Activated CD4-positive, alpha-beta memory T cell treated with anti-CD3 and anti-CD28 coated beads for 36 hours (primary cell): ENCODE measurements at regions of chr1 and their contacts with region 1.

Region 1: GRCh38 chr1:212035123-212035834 is at the starts of genes DTL and INTS7:
- DNase-seq: peak; percentile 99
- H3K4me3 Mint-ChIP-seq: peak within 1 kb of the TSS; percentile 97
- H3K27ac Mint-ChIP-seq: peak within 1 kb of the TSS; percentile 99
- H3K4me1 Mint-ChIP-seq: peaks cover 61% of the 10 kb centered on the region
- H3K27me3 Mint-ChIP-seq: peaks cover 2% of the 10 kb centered on the region
- total RNA-seq, gene DTL: 82.2 to 88.2 TPM
- total RNA-seq, gene INTS7: 19.3 to 19.6 TPM

Region 2: DNA sequence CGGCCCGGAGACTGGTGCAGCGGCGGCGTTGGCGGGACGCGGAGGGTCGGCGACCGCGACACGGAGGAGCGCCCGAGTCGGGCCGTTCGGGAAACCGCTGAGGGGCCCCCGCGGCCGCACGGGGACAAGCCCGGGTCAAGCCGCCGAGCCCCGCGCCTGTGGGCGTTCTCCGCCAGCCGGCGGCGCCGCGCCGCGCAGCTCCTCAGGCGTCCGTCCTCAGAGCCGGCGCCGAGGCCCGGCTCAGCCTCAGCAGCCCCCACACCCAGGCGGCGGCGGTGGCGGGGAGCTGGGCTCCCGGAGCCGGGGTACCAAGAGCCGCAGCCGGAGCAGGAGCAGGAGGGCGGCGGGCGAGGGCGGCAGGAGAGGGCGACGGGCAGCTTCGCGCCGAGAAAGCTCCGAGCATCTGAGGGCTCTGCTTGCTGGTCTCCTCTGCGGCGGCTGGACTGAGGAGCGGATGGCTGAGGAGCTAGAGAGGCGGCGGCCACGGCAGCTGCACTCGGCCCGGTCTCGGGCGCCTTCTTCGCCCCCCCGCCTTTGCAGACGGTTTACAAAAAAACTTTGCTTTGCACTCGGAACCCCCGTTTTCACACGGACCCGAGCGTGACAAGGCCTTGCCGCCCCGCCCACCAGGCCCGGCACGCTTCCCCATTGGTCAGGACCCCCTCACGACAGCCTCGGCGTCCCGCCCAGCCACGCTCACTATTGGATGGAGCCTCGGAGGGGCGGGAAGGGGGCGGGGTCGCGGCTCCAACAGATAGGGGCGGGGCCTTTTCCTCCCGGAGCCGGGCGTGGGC is 456.4 kb before region 1 on chr1 and contains the start of gene SLC30A1:
- CTCF ChIA-PET with region 1: interaction called, 6 read pairs
- POLR2A ChIA-PET with region 1: no interaction called
- intact Hi-C with region 1: loop called (anchors 1 kb)
- DNase-seq: peak; percentile 99
- H3K4me3 Mint-ChIP-seq: peak within 1 kb of the TSS; percentile 91
- H3K27ac Mint-ChIP-seq: peak within 1 kb of the TSS; percentile 69
- H3K4me1 Mint-ChIP-seq: peaks cover 32% of the 10 kb centered on the region
- H3K27me3 Mint-ChIP-seq: no peaks in the 10 kb centered on the region
- total RNA-seq, gene SLC30A1: 3.5 to 3.9 TPM

Region 3: DNA sequence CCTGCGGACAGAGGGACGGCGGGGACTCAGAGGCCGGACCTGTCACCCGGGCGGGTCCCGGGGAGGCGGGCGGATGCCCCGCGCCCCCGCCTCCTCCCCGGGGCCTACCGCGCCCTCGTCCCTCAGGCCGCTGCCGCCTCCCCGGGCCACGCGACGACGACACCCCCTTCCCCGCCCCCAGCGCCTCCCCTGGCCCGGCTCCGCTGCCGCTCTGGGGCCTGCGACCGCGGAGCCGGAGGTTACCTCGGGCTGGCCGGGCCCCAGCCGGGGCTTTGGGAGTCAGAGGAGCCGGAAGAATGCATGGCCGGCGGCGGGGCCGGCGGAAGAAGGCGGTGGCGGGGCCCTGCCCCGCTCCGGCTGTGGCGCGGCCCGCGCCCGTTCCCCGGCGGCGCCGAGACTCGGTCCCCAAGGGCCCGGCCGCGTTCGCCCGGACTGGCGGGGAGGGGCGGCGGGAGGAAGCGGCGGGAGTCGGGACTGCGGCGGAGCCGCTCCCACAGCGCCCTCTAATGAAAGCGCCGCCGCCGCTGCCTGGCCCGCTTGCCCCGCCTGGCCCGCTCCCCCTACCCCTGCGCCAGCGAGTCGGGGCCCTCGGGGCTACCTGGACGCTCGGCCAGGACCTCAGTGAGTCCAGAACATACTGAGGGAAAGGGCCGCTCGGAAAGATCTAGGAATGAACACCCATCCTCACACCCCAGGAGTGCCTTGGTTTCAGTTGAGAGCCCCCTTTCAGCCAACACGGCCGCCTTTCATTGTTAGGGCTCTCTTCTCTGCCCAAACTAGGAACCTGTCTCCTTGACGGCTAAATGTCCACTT is 204.7 kb before region 1 on chr1 and contains the start of gene LPGAT1:
- CTCF ChIA-PET with region 1: interaction called, 5 read pairs
- POLR2A ChIA-PET with region 1: no interaction called
- intact Hi-C with region 1: loop called (anchors 1 kb)
- DNase-seq: peak; percentile 77
- H3K4me3 Mint-ChIP-seq: peak within 1 kb of the TSS; percentile 86
- H3K27ac Mint-ChIP-seq: peak within 1 kb of the TSS; percentile 83
- H3K4me1 Mint-ChIP-seq: peaks cover 61% of the 10 kb centered on the region
- H3K27me3 Mint-ChIP-seq: no peaks in the 10 kb centered on the region
- total RNA-seq, gene LPGAT1: 31.8 to 34.7 TPM

Region 4: DNA sequence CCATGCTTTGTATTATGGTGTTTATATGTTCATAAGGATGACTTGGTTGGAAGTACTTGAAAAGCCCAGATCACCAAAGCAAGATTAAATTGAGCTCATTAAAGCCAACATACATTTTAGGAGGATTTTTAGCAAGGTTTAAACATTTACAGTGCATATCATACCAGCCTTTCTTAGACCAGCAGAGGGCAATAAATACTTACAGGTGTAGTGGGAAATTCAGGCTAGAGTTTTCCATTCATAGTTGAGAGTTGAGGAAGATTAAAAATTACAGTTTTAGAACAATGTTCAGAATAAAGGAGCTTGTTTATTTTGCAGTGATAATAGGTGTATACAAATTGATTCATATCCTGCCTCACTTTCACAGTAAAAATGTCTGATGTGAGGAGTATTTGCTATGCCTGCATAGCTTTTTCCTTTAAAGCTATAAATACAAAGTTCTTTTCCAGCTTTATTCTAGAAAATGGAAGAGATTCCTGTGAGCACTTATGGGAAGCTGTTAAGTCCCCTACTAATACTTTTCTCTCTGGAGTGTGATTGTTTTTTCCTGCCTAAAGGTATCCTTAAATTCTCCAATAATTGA is 35.5 kb after region 1 on chr1:
- CTCF ChIA-PET with region 1: interaction called, 12 read pairs
- POLR2A ChIA-PET with region 1: no interaction called
- intact Hi-C with region 1: no loop called
- DNase-seq: no peak
- H3K4me3 Mint-ChIP-seq: no peak overlapping the region
- H3K27ac Mint-ChIP-seq: peak overlapping the region; percentile 32
- H3K4me1 Mint-ChIP-seq: no peaks in the 10 kb centered on the region
- H3K27me3 Mint-ChIP-seq: no peaks in the 10 kb centered on the region

Region 5: GRCh38 chr1:212082765-212083406 is 47.6 kb after region 1 on chr1:
- CTCF ChIA-PET with region 1: no interaction called
- POLR2A ChIA-PET with region 1: no interaction called
- intact Hi-C with region 1: no loop called
- DNase-seq: no peak
- H3K4me3 Mint-ChIP-seq: no peak overlapping the region
- H3K27ac Mint-ChIP-seq: no peak overlapping the region
- H3K4me1 Mint-ChIP-seq: no peaks in the 10 kb centered on the region
- H3K27me3 Mint-ChIP-seq: no peaks in the 10 kb centered on the region

Region 6: DNA sequence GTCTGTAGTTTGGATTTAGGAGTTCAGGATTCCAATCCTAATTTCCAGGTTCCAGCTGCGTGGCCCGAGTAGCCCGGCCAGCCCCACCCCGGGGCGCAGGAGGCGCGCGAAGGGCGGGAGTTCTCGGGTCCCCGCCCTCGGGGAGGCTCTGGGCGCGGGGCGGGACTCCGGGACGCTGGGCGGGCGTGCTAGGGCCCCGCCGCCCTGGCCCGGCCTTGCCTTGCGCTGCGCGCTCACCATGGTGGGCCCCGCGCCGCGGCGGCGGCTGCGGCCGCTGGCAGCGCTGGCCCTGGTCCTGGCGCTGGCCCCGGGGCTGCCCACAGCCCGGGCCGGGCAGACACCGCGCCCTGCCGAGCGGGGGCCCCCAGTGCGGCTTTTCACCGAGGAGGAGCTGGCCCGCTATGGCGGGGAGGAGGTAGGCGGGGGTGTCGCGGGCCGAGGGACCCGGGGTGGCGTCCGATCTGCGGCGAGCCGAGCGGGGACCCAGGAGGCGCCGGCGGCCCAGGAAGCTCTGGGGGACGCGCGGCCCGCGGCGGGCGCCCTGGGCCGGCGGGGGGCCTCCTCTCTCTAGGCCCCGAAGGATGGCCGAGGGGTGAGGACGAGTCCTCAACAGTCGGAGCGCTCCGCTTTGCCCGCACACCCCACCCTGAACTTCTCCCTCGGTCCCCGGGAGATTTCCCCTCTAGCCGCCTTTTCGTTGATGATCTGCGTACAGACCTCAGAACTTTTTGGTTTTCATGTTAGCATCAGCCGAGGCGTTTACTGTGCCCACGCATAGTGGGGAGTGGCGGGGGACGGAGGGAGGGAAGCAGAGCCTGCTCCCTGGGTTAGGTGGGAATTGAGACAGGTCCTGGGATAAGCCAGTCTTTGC is 397.7 kb after region 1 on chr1 and contains the start of gene NENF:
- CTCF ChIA-PET with region 1: interaction called, 5 read pairs
- POLR2A ChIA-PET with region 1: no interaction called
- intact Hi-C with region 1: loop called (anchors 5 kb)
- DNase-seq: peak; percentile 84
- H3K4me3 Mint-ChIP-seq: peak within 1 kb of the TSS; percentile 73
- H3K27ac Mint-ChIP-seq: no peak within 1 kb of the TSS
- H3K4me1 Mint-ChIP-seq: peaks cover 33% of the 10 kb centered on the region
- H3K27me3 Mint-ChIP-seq: no peaks in the 10 kb centered on the region
- total RNA-seq, gene NENF: 38.4 to 42.7 TPM

Region 7: GRCh38 chr1:212791676-212792395 is 756.6 kb after region 1 on chr1 and contains the starts of genes NSL1 and TATDN3:
- CTCF ChIA-PET with region 1: no interaction called
- POLR2A ChIA-PET with region 1: no interaction called
- intact Hi-C with region 1: loop called (anchors 10 kb)
- DNase-seq: peak; percentile 97
- H3K4me3 Mint-ChIP-seq: peak within 1 kb of the TSS; percentile 95
- H3K27ac Mint-ChIP-seq: peak within 1 kb of the TSS; percentile 82
- H3K4me1 Mint-ChIP-seq: peaks cover 32% of the 10 kb centered on the region
- H3K27me3 Mint-ChIP-seq: no peaks in the 10 kb centered on the region
- total RNA-seq, gene NSL1: 39.8 to 41.8 TPM
- total RNA-seq, gene TATDN3: 19.2 to 20.7 TPM